ENCODE measurements at regions of chr14 and their contacts with region 1.

Region 1: GRCh38 chr14:89033756-89034155 is 209.3 kb downstream of the TTC8 start:
- DNase-seq: no peak
- H3K4me3 ChIP-seq: no peak overlapping the region
- H3K27ac ChIP-seq: no peak overlapping the region
- H3K4me1 ChIP-seq: no peaks in the 10 kb centered on the region
- H3K27me3 ChIP-seq: no peaks in the 10 kb centered on the region
- CTCF ChIP-seq: no peak
- POLR2A ChIP-seq: no peak

Region 2: GRCh38 chr14:89915114-89915878 is 881.5 kb after region 1 on chr14:
- intact Hi-C with region 1: loop called (anchors 10 kb)
- DNase-seq: peak; percentile 62
- H3K4me3 ChIP-seq: no peak overlapping the region
- H3K27ac ChIP-seq: no peak overlapping the region
- H3K4me1 ChIP-seq: peaks cover 0 to 4% of the 10 kb centered on the region in 2 donors
- H3K27me3 ChIP-seq: no peaks in the 10 kb centered on the region
- CTCF ChIP-seq: peak; percentile 86 to 91 (median 88)
- POLR2A ChIP-seq: no peak